Psoas muscle (tissue), 8 donors: ENCODE measurements at regions of chr12 and their contacts with region 1.

Region 1: DNA sequence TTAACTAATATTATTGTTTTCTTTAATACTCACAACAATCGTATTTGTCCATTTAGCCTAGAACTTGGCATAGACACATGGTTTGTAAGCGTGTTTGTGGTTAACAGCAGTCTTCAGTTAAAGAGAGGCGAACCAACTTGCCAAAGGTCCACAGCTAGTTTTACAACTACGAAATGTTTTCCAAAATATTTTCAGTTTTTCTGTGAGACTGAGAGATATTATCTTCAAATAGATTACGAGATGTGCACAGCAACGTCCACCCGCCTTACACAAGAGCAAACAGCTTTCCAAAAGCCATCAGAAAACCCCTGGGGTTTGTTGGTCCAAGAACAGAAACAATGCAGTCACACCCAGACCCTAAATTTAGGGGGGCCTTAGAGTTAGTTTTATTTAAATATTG is 58.6 kb upstream of the RASSF3 start:
- DNase-seq: no peak
- ATAC-seq: no peak
- H3K4me3 ChIP-seq: no peak overlapping the region
- H3K27ac ChIP-seq: no peak overlapping the region
- H3K4me1 ChIP-seq: peaks cover 3% of the 10 kb centered on the region
- H3K27me3 ChIP-seq: no peaks in the 10 kb centered on the region
- CTCF ChIP-seq: no peak

Region 2: GRCh38 chr12:64222009-64222765 is 329.5 kb before region 1 on chr12 and contains the start of gene KICS2:
- intact Hi-C with region 1: no loop called
- DNase-seq: peak; percentile 95 to 97
- ATAC-seq: peak; percentile 99 to 100 (median 100)
- H3K4me3 ChIP-seq: peak within 1 kb of the TSS; percentile 95
- H3K27ac ChIP-seq: peak within 1 kb of the TSS; percentile 97
- H3K4me1 ChIP-seq: peaks cover 4% of the 10 kb centered on the region
- H3K27me3 ChIP-seq: no peaks in the 10 kb centered on the region
- CTCF ChIP-seq: no peak
- total RNA-seq, gene KICS2: 8.5 to 18.2 (median 10.3) TPM

Region 3: GRCh38 chr12:64590183-64590582 is 38.5 kb after region 1 on chr12:
- intact Hi-C with region 1: loop called in 1 of 2 experiments (anchors 5 kb)
- DNase-seq: no peak
- ATAC-seq: no peak
- H3K4me3 ChIP-seq: no peak overlapping the region
- H3K27ac ChIP-seq: no peak overlapping the region
- H3K4me1 ChIP-seq: no peaks in the 10 kb centered on the region
- H3K27me3 ChIP-seq: no peaks in the 10 kb centered on the region
- CTCF ChIP-seq: no peak

Region 4: GRCh38 chr12:64696080-64696741 is 144.5 kb after region 1 on chr12:
- intact Hi-C with region 1: loop called (anchors 1 to 2 kb)
- DNase-seq: no peak
- ATAC-seq: no peak
- H3K4me3 ChIP-seq: no peak overlapping the region
- H3K27ac ChIP-seq: no peak overlapping the region
- H3K4me1 ChIP-seq: peaks cover 9% of the 10 kb centered on the region
- H3K27me3 ChIP-seq: no peaks in the 10 kb centered on the region
- CTCF ChIP-seq: peak; percentile 35